HAP-1 (cell line): ENCODE measurements at regions of chr11 and their contacts with region 1.

Region 1: GRCh38 chr11:125091247-125091876 is 20.1 kb downstream of the TMEM218 start:
- DNase-seq: peak; percentile 76 to 79
- H3K4me3 ChIP-seq: no peak overlapping the region
- H3K4me1 ChIP-seq: peaks cover 20% of the 10 kb centered on the region
- H3K27me3 ChIP-seq: no peaks in the 10 kb centered on the region

Region 2: GRCh38 chr11:124509982-124510678 is 581.2 kb before region 1 on chr11:
- in situ Hi-C with region 1: no loop called
- DNase-seq: no peak
- H3K4me3 ChIP-seq: no peak overlapping the region
- H3K4me1 ChIP-seq: no peaks in the 10 kb centered on the region
- H3K27me3 ChIP-seq: 0 out of 2 replicates have a peak, but pooled peaks cover 2% of the 10 kb centered on the region

Region 3: DNA sequence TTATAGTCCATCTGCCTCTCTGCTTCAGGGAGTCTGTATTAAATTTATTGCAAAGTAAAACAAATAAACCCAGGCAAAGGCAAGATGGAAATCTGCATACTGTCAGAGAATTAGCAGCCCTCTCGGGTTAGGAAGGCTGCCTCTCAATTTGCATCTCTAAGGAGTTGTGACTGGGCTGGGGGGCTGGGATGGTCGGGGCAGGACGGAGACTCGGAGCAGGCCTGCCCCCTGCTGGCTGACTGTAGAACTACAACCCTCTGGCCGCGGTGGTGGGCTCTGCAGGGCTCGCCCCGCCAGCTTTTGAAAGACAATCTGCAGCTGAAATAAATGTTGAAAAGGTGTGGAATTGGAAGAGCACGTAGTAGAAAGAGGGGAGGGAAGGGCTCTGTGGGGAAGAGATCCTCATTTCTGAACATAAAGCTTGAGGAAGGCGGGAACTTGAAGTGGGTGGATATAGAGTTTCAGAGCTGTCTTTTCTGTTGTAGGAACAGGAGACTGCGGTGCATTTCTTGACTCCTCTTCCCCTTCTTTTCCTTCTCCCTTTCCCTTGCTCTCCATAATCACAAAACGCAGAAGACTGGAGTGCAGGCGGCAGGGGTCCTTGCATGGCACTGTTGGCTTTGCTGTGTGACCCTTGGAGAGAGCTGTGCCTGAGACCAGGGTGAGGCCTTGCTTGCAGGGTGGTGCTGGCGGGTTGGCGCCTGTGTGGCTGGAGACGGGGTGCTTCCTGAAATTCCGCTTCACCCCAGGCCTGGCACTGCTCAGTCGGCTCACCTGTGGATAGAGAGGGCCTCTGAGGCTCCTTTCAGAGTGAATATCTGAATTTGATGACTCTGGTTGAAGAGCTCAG is 50.5 kb after region 1 on chr11:
- in situ Hi-C with region 1: loop called (anchors 10 kb)
- DNase-seq: peak; percentile 95
- H3K4me3 ChIP-seq: no peak overlapping the region
- H3K4me1 ChIP-seq: peaks cover 26% of the 10 kb centered on the region
- H3K27me3 ChIP-seq: no peaks in the 10 kb centered on the region

Region 4: DNA sequence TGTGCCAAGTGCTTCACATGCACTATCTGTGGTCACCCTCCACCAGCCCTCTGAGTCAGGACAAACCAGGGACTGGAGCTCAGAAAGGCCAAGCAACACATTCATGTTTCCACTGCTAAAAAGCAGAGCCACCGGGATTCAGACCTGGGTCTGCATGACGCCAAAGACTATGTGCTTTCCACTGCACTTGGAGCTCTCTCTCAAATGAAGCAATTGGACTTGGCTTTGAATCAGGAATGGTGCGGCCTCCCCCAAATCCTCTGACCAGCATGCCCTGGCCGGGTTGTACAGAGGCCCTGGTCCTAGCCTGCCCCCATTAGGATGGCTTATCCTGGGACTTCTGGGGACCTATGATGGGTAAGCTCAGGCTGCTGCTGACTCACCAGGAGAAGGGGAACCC is 153.9 kb after region 1 on chr11:
- in situ Hi-C with region 1: no loop called
- DNase-seq: no peak
- H3K4me3 ChIP-seq: no peak overlapping the region
- H3K4me1 ChIP-seq: no peaks in the 10 kb centered on the region
- H3K27me3 ChIP-seq: no peaks in the 10 kb centered on the region

Region 5: DNA sequence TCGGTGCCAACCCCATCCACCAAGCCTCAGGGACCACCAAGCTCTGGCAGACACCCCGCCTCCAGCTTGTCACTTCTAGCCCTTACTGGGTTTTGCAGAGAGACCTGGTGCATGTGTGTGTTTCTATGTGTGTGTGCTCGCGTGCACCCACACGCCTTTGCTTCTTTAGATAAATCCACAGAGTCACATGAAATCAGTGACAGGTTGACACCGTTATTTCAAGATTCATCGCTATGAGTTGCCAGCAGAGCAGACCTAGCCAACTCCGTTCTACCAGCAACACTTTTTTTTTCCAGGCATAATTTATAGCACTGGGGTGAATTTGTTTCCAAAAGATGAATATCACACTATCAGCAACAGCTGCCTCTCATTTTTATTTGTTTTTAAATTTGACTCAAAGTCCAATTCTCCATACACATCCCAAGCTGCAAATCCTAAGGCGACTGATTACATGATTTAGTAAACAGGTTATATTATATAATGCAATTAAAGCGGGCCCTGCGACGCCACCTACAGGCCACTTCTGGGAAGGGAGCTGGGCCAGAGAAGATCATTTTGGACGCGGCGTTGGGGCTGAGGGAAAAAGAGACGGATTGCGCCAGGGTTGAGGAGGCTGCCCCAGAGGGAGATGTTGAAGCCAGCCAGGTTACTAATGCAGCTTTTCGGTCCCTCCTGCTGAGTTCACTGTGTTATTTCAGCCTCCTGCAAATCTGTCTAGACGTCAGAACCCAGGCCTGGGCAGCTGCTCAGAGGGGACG is 254.2 kb after region 1 on chr11:
- in situ Hi-C with region 1: loop called (anchors 5 kb)
- DNase-seq: peak; percentile 27 to 80
- H3K4me3 ChIP-seq: no peak overlapping the region
- H3K4me1 ChIP-seq: peaks cover 4% of the 10 kb centered on the region; the same call in 1 of the 2 replicates
- H3K27me3 ChIP-seq: no peaks in the 10 kb centered on the region

Region 6: GRCh38 chr11:125429166-125429707 is 337.9 kb after region 1 on chr11:
- in situ Hi-C with region 1: loop called (anchors 10 kb)
- DNase-seq: peak; percentile 62 to 86
- H3K4me3 ChIP-seq: no peak overlapping the region
- H3K4me1 ChIP-seq: peaks cover 5% of the 10 kb centered on the region; the same call in 1 of the 2 replicates
- H3K27me3 ChIP-seq: no peaks in the 10 kb centered on the region